ENCODE measurements at regions of chr6 and their contacts with region 1.

Region 1: GRCh38 chr6:35688581-35689322 is at the start of gene FKBP5:
- DNase-seq: peak; percentile 65 to 93 (median 87)
- ATAC-seq: peak; percentile 87
- H3K4me3 ChIP-seq: peak within 1 kb of the TSS; percentile 63 to 85
- H3K4me3 Mint-ChIP-seq: peak within 1 kb of the TSS; percentile 98
- H3K27ac ChIP-seq: peak within 1 kb of the TSS; percentile 48 to 64
- H3K27ac Mint-ChIP-seq: peak within 1 kb of the TSS; percentile 96
- H3K4me1 ChIP-seq: peaks cover 14% of the 10 kb centered on the region
- H3K4me1 Mint-ChIP-seq: peaks cover 17% of the 10 kb centered on the region
- H3K27me3 ChIP-seq: no peaks in the 10 kb centered on the region
- H3K27me3 Mint-ChIP-seq: no peaks in the 10 kb centered on the region
- CTCF ChIP-seq: no peak
- total RNA-seq, gene FKBP5: 25.7 to 27.1 TPM

Region 2: DNA sequence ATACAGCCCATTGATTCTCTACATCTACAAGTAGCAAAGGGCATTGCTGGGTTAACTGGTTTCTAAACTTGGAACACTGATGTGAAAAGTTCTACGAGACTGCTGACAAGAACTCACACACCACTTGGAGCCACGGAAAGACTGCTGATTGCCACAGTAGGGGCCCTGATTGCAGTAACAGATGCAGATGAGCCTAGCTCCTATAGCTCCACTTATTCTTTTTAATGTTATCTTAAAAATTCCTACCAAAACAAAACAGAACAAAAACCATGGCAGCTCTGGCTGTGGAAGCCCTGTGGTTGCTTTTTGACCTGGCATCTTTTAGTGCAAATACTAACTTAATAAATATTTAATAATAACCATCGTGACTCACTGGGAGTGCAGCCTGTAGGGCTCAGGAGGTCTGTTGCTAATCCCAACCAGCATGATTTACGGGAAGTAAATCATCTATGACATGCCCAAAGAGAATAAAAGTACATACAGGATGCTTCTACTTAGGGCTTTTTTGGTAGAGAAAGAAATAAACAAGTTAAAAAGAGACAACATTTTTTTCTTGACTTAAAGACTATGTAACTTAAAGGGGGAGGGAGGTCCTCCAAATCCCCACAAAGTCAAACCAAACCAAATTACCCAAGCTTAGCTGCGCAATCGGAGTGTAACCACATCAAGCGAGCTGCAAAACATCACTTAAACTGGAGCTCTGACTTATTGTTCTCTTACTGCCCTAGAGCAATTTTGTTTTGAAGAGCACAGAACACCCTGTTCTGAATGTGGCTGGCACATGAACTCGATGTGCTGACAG is 87.2 kb before region 1 on chr6:
- CTCF ChIA-PET with region 1: interaction called, 3 read pairs
- POLR2A ChIA-PET with region 1: interaction called, 26 read pairs
- intact Hi-C with region 1: loop called in 1 of 2 experiments (anchors 5 kb)
- DNase-seq: peak; percentile 36 to 94 (median 69)
- ATAC-seq: peak; percentile 78
- H3K4me3 ChIP-seq: peak overlapping the region; percentile 27 to 47
- H3K4me3 Mint-ChIP-seq: peak overlapping the region; percentile 76
- H3K27ac ChIP-seq: peak overlapping the region; percentile 50 to 63
- H3K27ac Mint-ChIP-seq: peak overlapping the region; percentile 93
- H3K4me1 ChIP-seq: peaks cover 89% of the 10 kb centered on the region
- H3K4me1 Mint-ChIP-seq: peaks cover 76% of the 10 kb centered on the region
- H3K27me3 ChIP-seq: no peaks in the 10 kb centered on the region
- H3K27me3 Mint-ChIP-seq: no peaks in the 10 kb centered on the region
- CTCF ChIP-seq: no peak

Region 3: GRCh38 chr6:35650015-35650414 is 38.7 kb before region 1 on chr6:
- CTCF ChIA-PET with region 1: interaction called, 3 read pairs
- POLR2A ChIA-PET with region 1: no interaction called
- intact Hi-C with region 1: loop called in 1 of 2 experiments (anchors 5 kb)
- DNase-seq: no peak
- ATAC-seq: no peak
- H3K4me3 ChIP-seq: no peak overlapping the region
- H3K4me3 Mint-ChIP-seq: no peak overlapping the region
- H3K27ac ChIP-seq: no peak overlapping the region
- H3K27ac Mint-ChIP-seq: no peak overlapping the region
- H3K4me1 ChIP-seq: peaks cover 37% of the 10 kb centered on the region
- H3K4me1 Mint-ChIP-seq: peaks cover 56% of the 10 kb centered on the region
- H3K27me3 ChIP-seq: no peaks in the 10 kb centered on the region
- H3K27me3 Mint-ChIP-seq: no peaks in the 10 kb centered on the region
- CTCF ChIP-seq: no peak

Region 4: DNA sequence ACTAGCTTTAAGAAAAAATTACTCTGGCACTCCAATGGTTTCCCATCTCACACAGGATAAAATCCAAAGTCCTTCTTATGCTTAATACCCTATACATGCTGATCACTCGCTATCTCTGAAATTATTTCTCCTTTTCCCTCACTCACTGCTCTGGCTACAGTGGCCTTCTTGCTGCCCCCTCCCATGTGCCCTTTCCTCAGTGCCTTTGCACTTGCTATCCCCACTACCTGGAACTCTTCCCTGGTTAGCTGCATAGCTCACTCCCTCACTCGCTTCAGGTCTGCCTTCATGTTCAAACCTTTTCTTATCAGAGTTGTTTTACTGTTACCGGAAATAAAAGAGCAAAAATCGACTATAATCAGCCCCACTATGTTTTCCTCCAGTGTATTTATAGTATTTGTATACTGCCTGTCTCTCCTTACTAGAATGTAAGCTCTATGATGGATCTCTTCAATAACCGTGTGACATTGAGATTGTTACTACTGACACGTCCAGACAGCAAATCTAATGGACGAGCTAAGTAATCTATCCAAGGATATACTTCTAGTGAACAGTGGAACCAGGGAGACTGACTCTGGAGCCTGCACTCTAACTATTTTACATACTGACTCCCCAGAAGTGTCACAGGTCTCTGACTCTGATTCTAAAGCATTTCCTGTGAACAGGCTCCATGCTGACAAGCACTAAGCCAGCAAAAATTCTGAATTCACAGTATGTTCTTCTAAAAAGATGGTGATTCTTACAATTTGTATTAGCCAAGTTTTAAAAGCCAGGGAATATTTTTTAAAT is 25.1 kb before region 1 on chr6:
- CTCF ChIA-PET with region 1: no interaction called
- POLR2A ChIA-PET with region 1: interaction called, 3 read pairs
- intact Hi-C with region 1: loop called in 1 of 2 experiments (anchors 2 kb)
- DNase-seq: peak in 1 of 9 experiments; percentile 46
- ATAC-seq: peak; percentile 77
- H3K4me3 ChIP-seq: no peak overlapping the region
- H3K4me3 Mint-ChIP-seq: no peak overlapping the region
- H3K27ac ChIP-seq: no peak overlapping the region
- H3K27ac Mint-ChIP-seq: no peak overlapping the region
- H3K4me1 ChIP-seq: peaks cover 57% of the 10 kb centered on the region
- H3K4me1 Mint-ChIP-seq: peaks cover 17% of the 10 kb centered on the region
- H3K27me3 ChIP-seq: no peaks in the 10 kb centered on the region
- H3K27me3 Mint-ChIP-seq: no peaks in the 10 kb centered on the region
- CTCF ChIP-seq: no peak

Region 5: DNA sequence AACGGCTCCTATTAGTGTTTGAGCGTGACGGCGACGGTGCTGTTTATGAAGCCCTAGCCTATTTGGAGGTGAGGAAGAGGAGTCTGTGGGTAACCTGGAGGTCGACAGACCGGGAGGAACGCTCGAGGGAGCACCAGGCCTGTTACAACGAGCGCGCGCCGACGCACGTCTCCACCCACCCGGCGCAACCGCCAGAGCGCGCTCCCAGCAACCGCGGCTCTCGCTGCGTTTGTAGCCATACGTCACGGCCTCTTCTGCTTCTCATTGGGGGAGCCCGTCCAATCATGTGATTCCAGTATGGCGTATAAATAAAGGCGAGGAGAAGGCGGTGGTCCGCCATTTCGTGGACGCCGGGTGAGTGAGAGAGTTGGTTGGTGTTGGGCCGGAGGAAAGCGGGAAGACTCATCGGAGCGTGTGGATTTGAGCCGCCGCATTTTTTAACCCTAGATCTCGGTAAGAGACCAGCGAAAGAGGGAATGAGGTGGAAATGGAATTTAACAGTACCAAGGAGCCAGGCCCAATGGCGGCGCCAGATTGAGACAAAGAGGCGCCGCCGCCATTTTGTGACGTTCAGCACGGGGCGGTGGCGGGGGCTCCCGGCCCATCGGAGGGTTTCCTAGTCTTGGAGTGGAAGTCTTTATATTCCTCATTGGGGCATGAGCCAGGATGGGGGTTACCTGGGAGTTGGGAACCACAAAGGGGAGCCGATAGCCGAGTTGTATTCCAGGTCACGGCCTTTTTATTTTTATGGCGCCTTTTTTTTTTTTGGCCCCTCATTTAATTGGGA is 905.5 kb after region 1 on chr6 and contains the start of gene SRSF3:
- CTCF ChIA-PET with region 1: no interaction called
- POLR2A ChIA-PET with region 1: no interaction called
- intact Hi-C with region 1: loop called in 1 of 2 experiments (anchors 10 kb)
- DNase-seq: peak; percentile 90 to 99 (median 94)
- ATAC-seq: peak; percentile 86
- H3K4me3 ChIP-seq: peak within 1 kb of the TSS; percentile 72 to 74
- H3K4me3 Mint-ChIP-seq: peak within 1 kb of the TSS; percentile 97
- H3K27ac ChIP-seq: peak within 1 kb of the TSS; percentile 93 to 95
- H3K27ac Mint-ChIP-seq: peak within 1 kb of the TSS; percentile 99
- H3K4me1 ChIP-seq: peaks cover 42% of the 10 kb centered on the region
- H3K4me1 Mint-ChIP-seq: peaks cover 45% of the 10 kb centered on the region
- H3K27me3 ChIP-seq: no peaks in the 10 kb centered on the region
- H3K27me3 Mint-ChIP-seq: no peaks in the 10 kb centered on the region
- CTCF ChIP-seq: no peak
- total RNA-seq, gene SRSF3: 620 to 627 TPM

Measured in CD8-positive, alpha-beta T cell (primary cell).